ENCODE measurements at regions of chr9 and their contacts with region 1.

Region 1: GRCh38 chr9:85425153-85425611 is 316.6 kb downstream of the AGTPBP1 start:
- DNase-seq: peak; percentile 1
- ATAC-seq: peak; percentile 74
- H3K4me3 ChIP-seq: no peak overlapping the region
- H3K27ac ChIP-seq: no peak overlapping the region
- H3K4me1 ChIP-seq: no peaks in the 10 kb centered on the region
- H3K27me3 ChIP-seq: no peaks in the 10 kb centered on the region
- CTCF ChIP-seq: peak; percentile 77

Region 2: DNA sequence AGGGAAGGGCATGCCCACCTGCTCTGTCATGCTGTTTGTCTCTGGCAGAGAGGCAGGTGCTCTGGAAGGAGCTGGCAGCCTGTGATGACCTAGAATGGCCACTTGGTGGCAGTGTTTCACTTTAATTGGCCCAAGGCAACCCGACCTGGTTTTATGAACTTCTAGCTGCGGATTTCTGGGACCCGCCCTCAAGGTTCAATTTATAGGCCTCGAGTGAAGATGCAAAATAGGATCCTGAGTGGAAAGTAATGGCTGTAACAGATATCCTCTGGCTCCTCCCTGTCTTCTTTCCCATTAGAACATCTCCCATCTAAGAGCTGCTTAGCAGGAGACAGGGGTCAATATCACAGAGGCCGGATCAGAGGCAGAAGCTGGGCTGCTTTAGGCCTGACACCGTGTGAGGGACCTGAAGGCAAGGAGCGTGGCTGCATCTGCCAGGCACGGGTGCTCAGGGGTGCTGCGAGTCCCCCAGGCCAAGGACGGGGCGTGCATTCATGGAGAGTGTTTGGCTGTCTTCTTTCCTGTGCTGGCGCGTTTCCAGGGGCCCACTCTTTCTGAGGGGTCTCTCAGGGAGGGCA is 1027.9 kb before region 1 on chr9:
- CTCF ChIA-PET with region 1: no interaction called
- POLR2A ChIA-PET with region 1: no interaction called
- in situ Hi-C with region 1: no loop called
- intact Hi-C with region 1: loop called (anchors 10 kb)
- DNase-seq: peak; percentile 36
- ATAC-seq: peak; percentile 93
- H3K4me3 ChIP-seq: no peak overlapping the region
- H3K27ac ChIP-seq: no peak overlapping the region
- H3K4me1 ChIP-seq: no peaks in the 10 kb centered on the region
- H3K27me3 ChIP-seq: no peaks in the 10 kb centered on the region
- CTCF ChIP-seq: peak; percentile 81

Region 3: GRCh38 chr9:85114799-85115198 is 310.4 kb before region 1 on chr9:
- CTCF ChIA-PET with region 1: interaction called, 12 read pairs
- POLR2A ChIA-PET with region 1: no interaction called
- in situ Hi-C with region 1: no loop called
- intact Hi-C with region 1: no loop called
- DNase-seq: no peak
- ATAC-seq: no peak
- H3K4me3 ChIP-seq: no peak overlapping the region
- H3K27ac ChIP-seq: no peak overlapping the region
- H3K4me1 ChIP-seq: no peaks in the 10 kb centered on the region
- H3K27me3 ChIP-seq: no peaks in the 10 kb centered on the region
- CTCF ChIP-seq: no peak

Region 4: GRCh38 chr9:85310573-85310972 is 114.6 kb before region 1 on chr9:
- CTCF ChIA-PET with region 1: no interaction called
- POLR2A ChIA-PET with region 1: no interaction called
- in situ Hi-C with region 1: no loop called
- intact Hi-C with region 1: no loop called
- DNase-seq: no peak
- ATAC-seq: no peak
- H3K4me3 ChIP-seq: no peak overlapping the region
- H3K27ac ChIP-seq: no peak overlapping the region
- H3K4me1 ChIP-seq: no peaks in the 10 kb centered on the region
- H3K27me3 ChIP-seq: no peaks in the 10 kb centered on the region
- CTCF ChIP-seq: no peak